ENCODE measurements at regions of chr2 and their contacts with region 1.

Region 1: DNA sequence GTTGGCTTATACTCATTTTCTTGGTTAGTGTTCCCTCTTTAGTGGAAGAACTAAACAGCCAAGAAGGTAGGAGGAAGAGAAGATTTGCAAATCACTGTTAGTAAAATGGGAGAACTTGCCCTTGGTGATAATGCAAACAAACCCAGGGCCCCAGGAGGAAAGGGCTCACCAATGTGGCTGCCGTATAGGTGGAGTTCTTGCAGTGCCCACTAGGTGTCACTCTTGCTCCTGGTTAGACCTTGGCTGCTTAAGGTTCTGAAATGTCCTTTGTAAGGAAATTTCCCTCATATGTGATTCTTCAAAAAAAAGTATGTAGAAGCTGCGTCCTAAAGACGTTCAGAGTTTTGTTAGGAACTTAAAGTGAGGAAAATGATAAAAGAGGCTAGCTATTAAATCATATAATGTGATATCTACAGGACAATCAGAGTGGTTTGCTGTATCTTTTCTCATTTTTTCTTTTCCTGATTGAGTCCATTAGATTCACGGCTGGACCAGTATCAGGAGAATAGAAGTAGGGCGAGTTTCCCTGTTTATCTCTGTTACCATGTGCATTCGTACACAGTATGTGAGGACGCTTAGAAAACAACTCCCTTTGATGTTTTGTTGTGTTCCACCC is 48.6 kb downstream of the RPIA start:
- DNase-seq: peak; percentile 55 to 60 (median 55)
- H3K4me3 ChIP-seq: no peak overlapping the region
- H3K4me3 Mint-ChIP-seq: no peak overlapping the region
- H3K27ac ChIP-seq: no peak overlapping the region
- H3K27ac Mint-ChIP-seq: peak overlapping the region in 2 of 7 donors; percentile 27 to 46
- H3K4me1 ChIP-seq: no peaks in the 10 kb centered on the region
- H3K4me1 Mint-ChIP-seq: peaks cover 0 to 8% (median 3%) of the 10 kb centered on the region in 4 donors
- H3K27me3 ChIP-seq: no peaks in the 10 kb centered on the region
- H3K27me3 Mint-ChIP-seq: no peaks in the 10 kb centered on the region

Region 2: GRCh38 chr2:88753833-88754584 is 13.9 kb after region 1 on chr2:
- CTCF ChIA-PET with region 1: interaction called, 44 read pairs
- POLR2A ChIA-PET with region 1: no interaction called
- intact Hi-C with region 1: no loop called
- DNase-seq: peak in 4 of 5 donors; percentile 30 to 35 (median 32)
- H3K4me3 ChIP-seq: no peak overlapping the region
- H3K4me3 Mint-ChIP-seq: peak overlapping the region in 2 of 8 donors; percentile 17 to 61
- H3K27ac ChIP-seq: no peak overlapping the region
- H3K27ac Mint-ChIP-seq: peak overlapping the region in 6 of 7 donors; percentile 68 to 96 (median 87)
- H3K4me1 ChIP-seq: peaks cover 25% of the 10 kb centered on the region
- H3K4me1 Mint-ChIP-seq: peaks cover 11 to 28% (median 19%) of the 10 kb centered on the region in 4 donors
- H3K27me3 ChIP-seq: no peaks in the 10 kb centered on the region
- H3K27me3 Mint-ChIP-seq: no peaks in the 10 kb centered on the region

Region 3: DNA sequence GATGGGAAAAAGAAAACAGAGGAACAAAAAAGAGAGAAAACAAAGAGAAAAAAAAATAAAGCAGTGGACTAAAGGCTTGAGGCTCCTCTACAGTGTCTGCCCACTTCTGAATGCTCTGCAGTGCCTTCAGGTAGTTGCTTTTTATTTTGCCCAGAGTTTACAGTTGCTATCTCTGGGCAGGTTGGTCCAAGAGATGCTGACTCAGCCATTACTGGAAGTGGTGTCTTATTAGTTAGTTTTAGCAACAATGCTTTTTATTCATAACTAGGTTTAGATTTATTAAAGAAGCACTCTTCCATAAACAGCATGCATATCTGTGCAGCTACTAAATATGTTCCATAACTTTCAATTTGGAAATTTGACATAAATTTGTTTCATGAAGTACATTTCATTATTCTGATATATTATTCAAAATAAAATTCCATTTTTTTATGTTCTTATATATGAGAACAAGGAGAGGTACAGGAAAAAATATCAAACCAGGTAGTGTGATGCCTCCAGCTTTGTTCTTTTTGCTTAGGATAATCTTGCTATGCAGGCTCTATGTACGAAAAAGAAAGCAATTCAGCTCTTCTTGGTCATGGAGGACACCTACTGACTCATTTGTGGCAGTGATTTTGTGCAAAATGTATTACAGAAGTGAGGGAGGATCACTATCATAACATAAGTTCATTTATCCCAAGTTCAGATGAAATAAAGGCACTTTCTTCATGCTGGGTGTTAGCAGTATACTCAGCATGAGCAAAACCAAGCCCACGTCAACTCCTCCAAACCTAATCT is 20.9 kb after region 1 on chr2:
- CTCF ChIA-PET with region 1: interaction called, 3 read pairs
- POLR2A ChIA-PET with region 1: no interaction called
- intact Hi-C with region 1: loop called (anchors 1 kb)
- DNase-seq: no peak
- H3K4me3 ChIP-seq: no peak overlapping the region
- H3K4me3 Mint-ChIP-seq: no peak overlapping the region
- H3K27ac ChIP-seq: no peak overlapping the region
- H3K27ac Mint-ChIP-seq: no peak overlapping the region
- H3K4me1 ChIP-seq: no peaks in the 10 kb centered on the region
- H3K4me1 Mint-ChIP-seq: peaks cover 0 to 3% (median 1%) of the 10 kb centered on the region in 4 donors
- H3K27me3 ChIP-seq: no peaks in the 10 kb centered on the region
- H3K27me3 Mint-ChIP-seq: peaks cover 7 to 8% of the 10 kb centered on the region in 2 donors

Region 4: GRCh38 chr2:88880441-88880953 is 140.4 kb after region 1 on chr2:
- CTCF ChIA-PET with region 1: interaction called, 3 read pairs
- POLR2A ChIA-PET with region 1: no interaction called
- intact Hi-C with region 1: loop called (anchors 5 kb)
- DNase-seq: peak in 4 of 5 donors; percentile 26 to 32 (median 30)
- H3K4me3 ChIP-seq: no peak overlapping the region
- H3K4me3 Mint-ChIP-seq: no peak overlapping the region
- H3K27ac ChIP-seq: no peak overlapping the region
- H3K27ac Mint-ChIP-seq: peak overlapping the region in 1 of 7 donors; percentile 38
- H3K4me1 ChIP-seq: no peaks in the 10 kb centered on the region
- H3K4me1 Mint-ChIP-seq: peaks cover 0 to 1% (median 0%) of the 10 kb centered on the region in 4 donors
- H3K27me3 ChIP-seq: no peaks in the 10 kb centered on the region
- H3K27me3 Mint-ChIP-seq: peaks cover 2 to 7% of the 10 kb centered on the region in 2 donors

Measured in CD4-positive, alpha-beta memory T cell (primary cell).